Gastrocnemius medialis (tissue), 4 donors: ENCODE measurements at regions of chr2 and their contacts with region 1.

Region 1: DNA sequence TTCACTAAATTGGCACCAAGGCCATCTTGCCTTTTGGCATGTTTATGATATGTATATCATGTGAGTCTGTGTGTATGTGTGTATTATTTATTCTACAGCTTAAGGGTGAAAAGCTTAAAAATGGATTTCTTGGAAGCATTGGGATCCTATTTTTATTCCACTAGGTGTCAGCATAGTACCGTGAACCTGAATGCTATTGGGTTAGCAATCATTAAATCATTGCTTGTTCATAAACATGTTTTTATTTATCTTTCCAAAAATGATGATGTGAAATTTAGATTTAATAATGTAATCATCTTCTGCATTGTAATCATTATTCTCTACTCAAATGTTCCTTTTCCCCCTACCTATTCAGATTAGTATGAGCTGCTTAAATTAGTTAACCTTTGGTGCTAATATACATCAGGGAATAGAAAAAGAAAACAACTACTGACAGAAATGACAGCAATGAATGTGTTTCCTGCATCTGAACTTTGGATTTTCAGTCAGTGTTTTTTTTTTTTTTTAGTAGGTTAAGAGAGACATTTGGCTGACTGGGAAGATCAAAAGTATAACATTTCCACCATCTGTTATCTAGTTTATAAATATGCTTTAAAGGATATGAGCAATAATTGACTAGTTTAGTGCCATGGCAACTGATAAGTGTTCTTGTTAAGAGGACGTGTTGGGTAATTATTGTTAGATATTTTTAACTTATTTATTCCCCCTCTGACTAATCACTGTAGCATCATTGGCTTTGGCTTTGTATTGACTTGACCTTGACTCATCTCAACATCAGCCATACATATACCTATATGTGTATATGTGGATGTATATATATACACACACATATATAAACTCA is 14.1 kb upstream of the ZSWIM2 start:
- DNase-seq: no peak
- ATAC-seq: no peak
- H3K4me3 ChIP-seq: no peak overlapping the region
- H3K27ac ChIP-seq: no peak overlapping the region
- H3K4me1 ChIP-seq: no peaks in the 10 kb centered on the region
- H3K27me3 ChIP-seq: no peaks in the 10 kb centered on the region
- CTCF ChIP-seq: peak; percentile 49 to 69 (median 54)
- POLR2A ChIP-seq: no peak

Region 2: DNA sequence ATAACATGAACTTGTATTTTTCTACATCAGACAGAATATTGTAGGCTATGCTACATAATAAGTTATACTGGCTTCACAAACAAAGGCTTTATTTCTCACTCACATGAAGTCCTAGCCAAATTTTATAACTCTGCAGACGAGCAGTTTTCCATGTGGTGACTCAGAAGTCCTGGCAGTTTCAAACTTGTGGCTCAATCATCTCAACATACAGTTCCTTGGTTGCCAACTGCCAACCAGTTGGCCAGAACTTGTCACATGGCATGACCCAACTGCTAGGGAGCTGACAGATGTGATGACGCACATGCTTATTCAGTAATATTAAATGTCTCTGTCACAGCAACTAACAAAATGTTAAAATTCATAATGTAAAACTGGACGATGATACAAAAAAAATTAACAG is 440.9 kb before region 1 on chr2:
- in situ Hi-C with region 1: no loop called
- intact Hi-C with region 1: no loop called
- DNase-seq: peak; percentile 40 to 85
- ATAC-seq: peak; percentile 97 to 100
- H3K4me3 ChIP-seq: no peak overlapping the region
- H3K27ac ChIP-seq: peak overlapping the region in 2 of 4 donors; percentile 23 to 40
- H3K4me1 ChIP-seq: peaks cover 4% of the 10 kb centered on the region in 2 donors
- H3K27me3 ChIP-seq: no peaks in the 10 kb centered on the region
- CTCF ChIP-seq: no peak
- POLR2A ChIP-seq: no peak

Region 3: GRCh38 chr2:187442378-187442777 is 579.3 kb after region 1 on chr2:
- in situ Hi-C with region 1: loop called in 1 of 4 experiments (anchors 5 kb)
- intact Hi-C with region 1: no loop called
- DNase-seq: no peak
- ATAC-seq: no peak
- H3K4me3 ChIP-seq: no peak overlapping the region
- H3K27ac ChIP-seq: no peak overlapping the region
- H3K4me1 ChIP-seq: no peaks in the 10 kb centered on the region
- H3K27me3 ChIP-seq: no peaks in the 10 kb centered on the region
- CTCF ChIP-seq: no peak
- POLR2A ChIP-seq: no peak

Region 4: DNA sequence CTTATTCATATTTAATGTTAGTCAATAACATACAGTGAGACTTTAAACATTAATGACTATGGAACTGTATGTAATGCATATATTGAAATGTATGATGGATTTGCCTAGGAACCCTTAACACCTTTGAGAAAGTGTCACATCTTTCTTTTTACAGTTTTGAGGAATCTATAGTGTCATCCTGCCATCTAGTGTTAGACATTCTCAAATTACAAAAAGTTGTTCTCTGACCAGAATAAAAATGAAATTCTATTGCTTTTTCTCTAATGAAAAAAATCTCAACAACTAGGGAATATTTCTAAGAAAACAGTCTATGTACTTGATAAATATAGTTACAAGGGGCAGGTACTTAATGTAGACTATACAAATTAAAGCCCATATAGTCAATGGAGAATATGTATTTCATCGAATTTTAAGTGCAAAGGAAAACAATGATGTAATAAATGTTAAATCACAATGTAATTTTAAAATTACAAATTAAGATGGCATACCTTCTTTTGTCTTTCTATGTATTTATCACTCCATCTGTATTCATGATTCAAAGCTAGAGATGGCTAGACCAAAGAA is 590.1 kb after region 1 on chr2:
- in situ Hi-C with region 1: loop called in 3 of 4 experiments (anchors 5 to 10 kb)
- intact Hi-C with region 1: loop called (anchors 2 kb)
- DNase-seq: no peak
- ATAC-seq: no peak
- H3K4me3 ChIP-seq: no peak overlapping the region
- H3K27ac ChIP-seq: no peak overlapping the region
- H3K4me1 ChIP-seq: no peaks in the 10 kb centered on the region
- H3K27me3 ChIP-seq: no peaks in the 10 kb centered on the region
- CTCF ChIP-seq: peak in 4 of 5 experiments; percentile 16 to 46 (median 30)
- POLR2A ChIP-seq: no peak